ENCODE measurements at regions of chr1 and their contacts with region 1.

Region 1: GRCh38 chr1:235866913-235867845 is 473 bp upstream of the LYST start:
- DNase-seq: peak; percentile 96
- H3K4me3 ChIP-seq: peak overlapping the region; percentile 96 to 97
- H3K27ac ChIP-seq: peak overlapping the region; percentile 96 to 97
- H3K4me1 ChIP-seq: no peaks in the 10 kb centered on the region
- H3K27me3 ChIP-seq: no peaks in the 10 kb centered on the region
- CTCF ChIP-seq: peak in 1 of 4 experiments; percentile 1
- POLR2A ChIP-seq: no peak

Region 2: GRCh38 chr1:235504496-235505222 is 362.5 kb before region 1 on chr1:
- intact Hi-C with region 1: loop called (anchors 10 kb)
- DNase-seq: peak; percentile 99
- H3K4me3 ChIP-seq: peak overlapping the region; percentile 67 to 88
- H3K27ac ChIP-seq: peak overlapping the region; percentile 98
- H3K4me1 ChIP-seq: no peaks in the 10 kb centered on the region
- H3K27me3 ChIP-seq: no peaks in the 10 kb centered on the region
- CTCF ChIP-seq: peak; percentile 90 to 99 (median 96)
- POLR2A ChIP-seq: peak; percentile 6

Region 3: GRCh38 chr1:235971571-235972310 is 104.6 kb after region 1 on chr1:
- intact Hi-C with region 1: loop called (anchors 2 kb)
- DNase-seq: peak; percentile 82
- H3K4me3 ChIP-seq: peak overlapping the region; percentile 19 to 20
- H3K27ac ChIP-seq: peak overlapping the region; percentile 81 to 82
- H3K4me1 ChIP-seq: no peaks in the 10 kb centered on the region
- H3K27me3 ChIP-seq: no peaks in the 10 kb centered on the region
- CTCF ChIP-seq: peak; percentile 55 to 87 (median 83)
- POLR2A ChIP-seq: peak; percentile 37

Region 4: GRCh38 chr1:236064674-236065508 is 197.7 kb after region 1 on chr1 and contains the start of gene NID1:
- intact Hi-C with region 1: loop called (anchors 10 kb)
- DNase-seq: peak; percentile 63
- H3K4me3 ChIP-seq: peak within 1 kb of the TSS; percentile 61 to 82
- H3K27ac ChIP-seq: peak within 1 kb of the TSS; percentile 86 to 92
- H3K4me1 ChIP-seq: no peaks in the 10 kb centered on the region
- H3K27me3 ChIP-seq: no peaks in the 10 kb centered on the region
- CTCF ChIP-seq: peak in 3 of 4 experiments; percentile 12 to 47 (median 37)
- POLR2A ChIP-seq: peak; percentile 64
- total RNA-seq, gene NID1: 21.6 to 74.9 TPM

Region 5: GRCh38 chr1:236201786-236202185 is 334.6 kb after region 1 on chr1:
- intact Hi-C with region 1: no loop called
- DNase-seq: no peak
- H3K4me3 ChIP-seq: no peak overlapping the region
- H3K27ac ChIP-seq: no peak overlapping the region
- H3K4me1 ChIP-seq: no peaks in the 10 kb centered on the region
- H3K27me3 ChIP-seq: no peaks in the 10 kb centered on the region
- CTCF ChIP-seq: no peak
- POLR2A ChIP-seq: no peak

Measured in prostate gland (tissue), 2 donors.